RWPE1 (cell line): ENCODE measurements at regions of chr2 and their contacts with region 1.

Region 1: GRCh38 chr2:109545828-109546713 is 67.7 kb downstream of the SEPTIN10 start:
- DNase-seq: peak; percentile 58
- H3K27ac ChIP-seq: no peak overlapping the region
- CTCF ChIP-seq: peak; percentile 98

Region 2: DNA sequence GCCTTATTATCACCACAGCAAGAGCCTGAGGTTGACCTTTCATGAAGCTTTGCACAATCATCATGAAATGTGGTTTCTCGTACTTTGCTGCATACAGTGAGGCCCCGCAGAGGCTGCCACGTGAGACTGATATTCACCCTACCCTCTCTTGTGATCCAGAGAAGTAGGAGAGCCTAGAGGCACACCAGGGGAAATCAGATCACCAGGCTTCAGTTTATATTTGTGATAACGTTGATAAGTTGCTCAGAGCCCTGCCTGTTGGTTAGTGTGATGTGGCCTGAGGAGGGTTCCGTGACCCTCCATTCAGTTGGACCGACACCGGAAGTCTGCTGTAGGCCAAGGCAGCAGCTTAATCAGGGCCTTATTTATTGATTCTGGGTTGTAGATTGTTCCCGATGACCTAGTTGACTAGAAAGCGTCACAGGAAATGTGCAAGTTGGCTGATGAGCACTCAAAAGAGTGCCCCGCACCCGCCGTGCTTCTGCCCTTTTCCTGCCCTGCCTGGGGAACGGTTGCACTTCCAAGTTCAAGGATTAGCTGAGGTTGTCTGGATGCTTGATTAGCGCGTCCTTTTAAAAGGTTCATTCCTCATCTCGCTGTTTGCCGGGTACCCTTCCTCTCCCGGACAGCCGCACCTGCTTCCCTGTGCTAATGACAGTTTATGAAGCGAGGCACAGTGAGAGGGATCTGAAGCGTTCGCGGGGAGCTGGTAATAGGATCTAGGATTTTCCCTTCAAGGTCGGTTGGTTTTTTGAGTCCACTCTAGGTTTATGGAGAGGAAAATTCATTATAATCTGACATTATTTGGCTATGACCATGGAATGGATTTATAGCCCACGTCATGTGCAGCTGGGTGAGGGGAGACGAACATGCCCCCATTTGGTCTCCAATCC is 270.7 kb before region 1 on chr2:
- CTCF ChIA-PET with region 1: no interaction called
- POLR2A ChIA-PET with region 1: no interaction called
- DNase-seq: no peak
- H3K27ac ChIP-seq: no peak overlapping the region
- CTCF ChIP-seq: no peak

Region 3: DNA sequence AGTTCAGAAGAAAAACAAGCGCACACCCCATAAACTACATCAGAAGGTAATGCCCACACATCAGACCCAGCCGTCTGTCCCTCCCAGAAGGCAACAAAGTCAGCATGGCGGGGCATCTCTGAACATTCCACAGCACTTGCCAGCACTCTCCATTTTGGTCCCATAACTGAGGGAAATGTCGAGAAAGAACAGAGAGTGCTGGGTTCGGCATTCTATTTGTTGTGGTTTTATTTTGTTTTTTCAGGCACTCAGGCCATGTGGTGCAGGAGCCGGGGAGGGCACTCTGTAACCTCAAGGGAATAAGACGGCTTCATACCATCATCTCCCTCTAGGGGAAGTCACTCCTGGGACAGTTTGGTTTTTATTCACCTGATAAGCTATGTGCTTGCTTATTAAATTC is 88.3 kb before region 1 on chr2:
- CTCF ChIA-PET with region 1: no interaction called
- POLR2A ChIA-PET with region 1: no interaction called
- DNase-seq: no peak
- H3K27ac ChIP-seq: no peak overlapping the region
- CTCF ChIP-seq: no peak

Region 4: DNA sequence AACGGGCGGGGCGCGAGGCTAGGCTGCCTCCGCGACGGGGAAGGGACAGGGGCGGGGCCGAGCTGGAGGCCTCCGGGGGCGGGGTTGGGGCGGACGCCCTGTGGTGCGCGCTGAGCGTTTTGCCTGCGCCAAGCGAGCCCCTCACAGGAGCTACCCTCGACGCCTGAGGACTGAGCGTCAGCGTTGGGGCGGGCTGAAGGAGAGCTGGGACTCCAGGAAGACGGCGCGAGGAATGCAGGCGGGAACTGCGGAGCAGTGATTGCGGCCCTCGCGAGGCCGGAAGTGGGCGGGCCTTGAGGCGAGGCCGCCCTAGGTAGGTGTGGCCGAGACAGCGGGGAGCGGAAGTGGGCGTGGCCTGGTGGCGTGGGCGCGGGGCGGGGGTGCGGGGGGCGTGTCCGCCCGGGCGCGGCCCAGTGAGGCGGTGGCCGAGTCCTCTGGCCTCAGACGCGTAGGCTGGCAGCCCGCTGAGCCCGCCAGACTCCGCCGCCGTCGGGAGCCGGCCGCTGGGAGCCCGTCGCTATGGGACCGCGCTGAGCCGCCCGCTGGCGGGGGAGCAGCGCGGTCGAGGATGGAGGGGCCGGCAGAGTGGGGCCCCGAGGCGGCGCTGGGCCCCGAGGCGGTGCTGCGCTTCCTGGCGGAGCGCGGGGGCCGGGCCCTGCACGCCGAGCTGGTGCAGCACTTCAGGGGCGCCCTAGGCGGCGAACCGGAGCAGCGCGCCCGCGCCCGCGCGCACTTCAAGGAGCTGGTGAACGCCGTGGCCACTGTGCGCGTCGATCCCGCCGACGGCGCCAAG is 68.0 kb after region 1 on chr2 and contains the starts of genes SEPTIN10 and SOWAHC:
- CTCF ChIA-PET with region 1: interaction called, 12 read pairs
- POLR2A ChIA-PET with region 1: no interaction called
- DNase-seq: peak; percentile 93
- H3K27ac ChIP-seq: peak within 1 kb of the TSS; percentile 100
- CTCF ChIP-seq: no peak

Region 5: GRCh38 chr2:109663721-109664120 is 117.7 kb after region 1 on chr2:
- CTCF ChIA-PET with region 1: interaction called, 13 read pairs
- POLR2A ChIA-PET with region 1: no interaction called
- DNase-seq: peak; percentile 61
- H3K27ac ChIP-seq: peak overlapping the region; percentile 66
- CTCF ChIP-seq: no peak

Region 6: DNA sequence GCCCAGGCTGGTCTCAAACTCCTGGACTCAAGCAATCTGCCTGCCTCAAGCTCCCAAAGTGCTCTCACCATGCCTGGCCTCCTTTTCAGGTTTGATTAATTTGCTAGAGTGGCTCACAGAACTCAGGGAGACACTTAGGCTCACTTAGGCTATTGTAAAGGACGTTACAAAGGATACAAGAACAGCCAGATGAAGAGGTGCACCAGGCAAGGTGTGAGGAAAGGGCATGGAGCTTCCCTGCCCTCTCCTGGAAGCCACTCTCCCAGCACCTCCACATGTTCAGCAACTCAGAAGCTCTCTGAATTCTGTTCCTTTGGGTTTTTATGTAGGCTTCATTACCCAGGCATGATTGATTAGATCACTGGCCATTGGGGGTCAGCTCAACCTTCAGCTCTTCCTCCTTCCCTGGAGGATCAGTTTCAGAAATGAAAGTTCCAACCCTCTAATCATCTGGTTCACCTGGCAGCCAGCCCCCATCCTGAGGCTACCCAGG is 169.3 kb after region 1 on chr2:
- CTCF ChIA-PET with region 1: interaction called, 51 read pairs
- POLR2A ChIA-PET with region 1: no interaction called
- DNase-seq: peak; percentile 55
- H3K27ac ChIP-seq: no peak overlapping the region
- CTCF ChIP-seq: peak; percentile 56

Region 7: DNA sequence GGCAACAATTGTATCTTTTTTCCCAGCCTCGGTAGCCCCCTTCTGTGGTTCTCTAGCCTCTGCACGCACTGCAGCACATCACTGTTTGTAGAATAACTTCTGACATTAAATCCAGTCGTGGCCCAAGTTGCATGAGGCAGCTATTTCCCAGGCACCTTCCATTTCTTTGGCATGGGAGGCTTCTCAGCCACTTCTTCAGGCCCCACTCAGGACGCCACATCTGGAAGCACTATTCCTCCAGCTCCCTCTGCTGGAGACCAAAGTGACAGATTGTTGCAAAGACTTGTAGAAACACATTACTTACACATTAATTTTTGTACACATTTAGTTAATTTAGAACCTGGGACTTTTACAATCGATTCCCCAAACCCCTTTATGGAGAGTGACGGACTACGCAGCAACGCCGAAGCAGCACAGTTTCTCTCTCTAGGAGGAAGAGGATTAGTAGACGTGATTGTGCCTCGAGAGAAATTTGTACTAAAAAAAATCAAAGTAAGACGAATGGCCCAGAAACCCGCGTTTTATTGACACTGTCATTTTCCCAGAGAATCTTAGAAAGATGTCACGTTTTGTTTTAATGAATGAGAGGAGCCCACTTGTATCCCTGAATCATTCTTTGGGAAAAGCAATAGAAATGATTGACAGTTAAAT is 190.2 kb after region 1 on chr2:
- CTCF ChIA-PET with region 1: interaction called, 21 read pairs
- POLR2A ChIA-PET with region 1: no interaction called
- DNase-seq: peak; percentile 50
- H3K27ac ChIP-seq: no peak overlapping the region
- CTCF ChIP-seq: peak; percentile 80